Activated T-helper 1 cell treated with anti-CD3 and anti-CD28 coated beads, Interleukin-12 subunit alpha, Interleukin-12 subunit beta, Interleukin-2, Interleukin-4 antibody, amounts not matched to agents 30 ng/mL and 10 ng/mL and 1 ng/mL, durations not matched to agents 14 hours and 24 hours and 36 hours (primary cell): ENCODE measurements at regions of chr11 and their contacts with region 1.

Region 1: GRCh38 chr11:62123669-62124185 is at the start of gene INCENP:
- DNase-seq: peak; percentile 94
- H3K4me3 Mint-ChIP-seq: peak within 1 kb of the TSS; percentile 94
- H3K27ac Mint-ChIP-seq: peak within 1 kb of the TSS; percentile 73
- H3K4me1 Mint-ChIP-seq: peaks cover 33% of the 10 kb centered on the region
- H3K27me3 Mint-ChIP-seq: peaks cover 11% of the 10 kb centered on the region
- total RNA-seq, gene INCENP: 94.3 and 98.1 TPM in 2 replicates

Region 2: GRCh38 chr11:61695917-61696316 is 427.8 kb before region 1 on chr11:
- intact Hi-C with region 1: loop called (anchors 10 kb)
- DNase-seq: peak; percentile 90
- H3K4me3 Mint-ChIP-seq: peak overlapping the region; percentile 70
- H3K27ac Mint-ChIP-seq: peak overlapping the region; percentile 82
- H3K4me1 Mint-ChIP-seq: peaks cover 25% of the 10 kb centered on the region
- H3K27me3 Mint-ChIP-seq: peaks cover 3% of the 10 kb centered on the region

Region 3: GRCh38 chr11:61827571-61828378 is 296.0 kb before region 1 on chr11 and contains the start of gene FADS2:
- intact Hi-C with region 1: loop called (anchors 1 kb)
- DNase-seq: peak; percentile 91
- H3K4me3 Mint-ChIP-seq: peak within 1 kb of the TSS; percentile 93
- H3K27ac Mint-ChIP-seq: peak within 1 kb of the TSS; percentile 96
- H3K4me1 Mint-ChIP-seq: peaks cover 50% of the 10 kb centered on the region
- H3K27me3 Mint-ChIP-seq: no peaks in the 10 kb centered on the region
- total RNA-seq, gene FADS2: 250 and 256 TPM in 2 replicates

Region 4: DNA sequence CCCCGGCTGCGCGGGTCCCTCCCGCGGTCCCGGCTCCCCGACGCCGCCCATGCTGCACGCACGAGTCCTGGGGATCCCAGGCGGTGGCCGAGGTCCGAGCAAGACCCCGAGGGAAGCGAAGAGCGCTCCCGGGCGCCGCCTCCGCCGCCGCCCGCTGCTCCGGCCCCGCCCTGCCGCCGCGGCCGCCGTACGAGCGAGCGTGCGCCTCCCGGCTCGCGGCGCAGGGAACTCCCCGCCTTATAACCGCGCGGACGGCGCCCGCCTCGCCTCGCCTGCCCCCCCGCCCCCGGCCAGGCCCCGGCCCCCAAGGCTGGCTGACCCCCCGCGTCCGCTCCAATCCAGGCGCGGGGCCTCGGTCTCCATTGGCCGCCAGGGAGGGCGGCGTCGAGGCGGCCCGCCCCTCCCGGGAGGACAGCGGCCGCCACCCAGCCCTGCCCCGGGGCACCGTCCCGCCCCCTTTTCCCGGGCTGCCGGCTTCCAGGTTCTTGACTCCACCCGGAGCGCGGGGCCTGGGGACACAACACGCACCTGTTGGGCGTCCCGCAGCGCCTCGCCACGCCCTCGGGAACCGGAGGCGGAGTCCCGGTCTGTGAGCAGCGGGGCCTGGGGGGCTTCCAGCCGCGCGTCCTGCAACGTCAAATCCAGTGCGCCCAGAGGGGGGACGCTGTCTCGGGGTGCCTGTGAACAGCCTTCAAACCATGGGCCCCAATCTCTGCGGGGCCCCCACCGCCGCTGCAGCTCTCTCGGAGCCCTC is 232.2 kb before region 1 on chr11 and contains the start of gene FADS3:
- intact Hi-C with region 1: loop called (anchors 2 kb)
- DNase-seq: peak; percentile 64
- H3K4me3 Mint-ChIP-seq: peak within 1 kb of the TSS; percentile 88
- H3K27ac Mint-ChIP-seq: peak within 1 kb of the TSS; percentile 29
- H3K4me1 Mint-ChIP-seq: peaks cover 3% of the 10 kb centered on the region
- H3K27me3 Mint-ChIP-seq: peaks cover 6% of the 10 kb centered on the region
- total RNA-seq, gene FADS3: 9.0 and 14.2 TPM in 2 replicates

Region 5: DNA sequence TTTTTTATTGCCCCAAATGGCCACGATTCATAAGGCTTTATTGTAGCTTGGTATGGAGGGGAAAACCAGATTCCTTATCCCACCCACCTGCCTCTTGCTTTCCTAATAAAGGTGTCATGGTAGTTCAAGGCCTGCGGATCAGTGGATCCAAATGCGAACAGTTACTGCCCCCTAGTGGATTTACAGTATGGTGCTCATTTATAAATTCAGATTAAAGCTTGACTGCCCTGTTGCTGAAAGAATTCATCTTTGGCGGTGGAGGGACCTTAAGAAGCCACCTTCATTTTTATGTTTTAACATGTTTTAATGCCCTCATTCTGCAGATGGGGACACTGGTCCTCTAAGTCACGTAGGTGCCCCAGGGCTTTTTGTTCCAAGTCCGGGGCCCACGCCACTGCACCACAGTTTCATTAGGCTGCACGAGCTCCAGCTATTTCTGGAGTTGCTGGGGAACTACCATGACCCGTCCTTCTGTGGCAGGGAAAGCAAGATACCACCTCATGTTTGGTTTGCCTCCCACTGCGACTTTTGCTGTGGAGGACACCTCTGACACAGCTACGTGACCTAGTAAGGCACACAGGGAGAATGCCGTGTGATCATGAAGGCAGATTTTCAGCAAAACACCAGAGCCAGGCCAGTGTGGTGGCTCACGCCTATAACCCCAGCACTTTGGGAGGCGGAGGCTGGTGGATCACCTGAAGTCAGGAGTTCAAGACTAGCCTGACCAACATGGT is 15.5 kb before region 1 on chr11:
- intact Hi-C with region 1: loop called (anchors 1 kb)
- DNase-seq: peak; percentile 12
- H3K4me3 Mint-ChIP-seq: no peak overlapping the region
- H3K27ac Mint-ChIP-seq: no peak overlapping the region
- H3K4me1 Mint-ChIP-seq: peaks cover 13% of the 10 kb centered on the region
- H3K27me3 Mint-ChIP-seq: peaks cover 4% of the 10 kb centered on the region

Region 6: GRCh38 chr11:62186195-62186594 is 62.5 kb after region 1 on chr11:
- intact Hi-C with region 1: no loop called
- DNase-seq: no peak
- H3K4me3 Mint-ChIP-seq: no peak overlapping the region
- H3K27ac Mint-ChIP-seq: no peak overlapping the region
- H3K4me1 Mint-ChIP-seq: no peaks in the 10 kb centered on the region
- H3K27me3 Mint-ChIP-seq: peaks cover 10% of the 10 kb centered on the region

Region 7: GRCh38 chr11:62309991-62310390 is 186.3 kb after region 1 on chr11:
- intact Hi-C with region 1: loop called (anchors 5 kb)
- DNase-seq: no peak
- H3K4me3 Mint-ChIP-seq: no peak overlapping the region
- H3K27ac Mint-ChIP-seq: no peak overlapping the region
- H3K4me1 Mint-ChIP-seq: peaks cover 5% of the 10 kb centered on the region
- H3K27me3 Mint-ChIP-seq: peaks cover 32% of the 10 kb centered on the region